Activated CD4-positive, alpha-beta T cell treated with anti-CD3 and anti-CD28 coated beads, Interleukin-2, amount 10 ng/mL, durations not matched to agents 24 days and 14 days (primary cell): ENCODE measurements at regions of chr14 and their contacts with region 1.

Region 1: DNA sequence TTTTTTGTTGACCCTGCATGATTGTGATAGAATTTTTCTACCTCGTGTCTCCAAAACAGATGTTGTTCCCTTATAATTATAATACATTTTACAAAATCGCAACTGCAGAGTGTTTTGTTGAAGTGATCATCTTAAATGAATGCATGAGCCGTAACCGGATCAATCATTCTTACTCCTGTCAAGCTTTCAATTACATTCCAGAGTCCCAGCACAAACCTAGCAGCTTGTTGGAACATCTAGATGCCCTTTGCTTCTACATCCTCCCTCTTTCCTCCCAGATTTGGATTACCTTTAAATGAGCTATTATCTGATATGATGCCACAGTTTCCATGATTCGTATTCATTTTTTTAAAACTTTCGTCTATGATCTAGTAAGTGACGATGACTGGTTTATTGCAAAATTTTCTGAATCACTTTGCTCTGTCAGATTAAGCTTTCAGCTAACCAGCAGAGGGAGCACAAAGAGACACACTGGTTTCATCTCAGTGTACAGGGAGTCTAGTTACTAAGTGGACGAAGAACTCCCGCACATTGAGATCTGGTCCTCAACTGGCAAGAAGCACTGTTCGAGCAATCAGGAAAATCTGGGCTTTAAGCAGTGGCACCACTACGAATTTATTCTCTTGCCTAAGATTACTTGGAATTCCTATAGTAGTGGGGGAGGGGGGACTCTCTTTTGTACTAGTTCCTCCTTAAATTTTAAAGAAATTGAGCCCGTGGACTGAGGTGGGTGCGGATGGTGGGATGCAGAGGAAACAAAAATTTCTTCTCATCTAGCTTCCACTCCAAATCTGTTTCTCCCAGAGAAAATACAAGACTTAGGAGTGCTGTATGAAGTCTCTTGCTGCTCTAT is 40.9 kb downstream of the TSHR start:
- DNase-seq: peak; percentile 80
- H3K4me3 Mint-ChIP-seq: no peak overlapping the region
- H3K27ac Mint-ChIP-seq: no peak overlapping the region
- H3K4me1 Mint-ChIP-seq: peaks cover 5% of the 10 kb centered on the region
- H3K27me3 Mint-ChIP-seq: peaks cover 49% of the 10 kb centered on the region

Region 2: DNA sequence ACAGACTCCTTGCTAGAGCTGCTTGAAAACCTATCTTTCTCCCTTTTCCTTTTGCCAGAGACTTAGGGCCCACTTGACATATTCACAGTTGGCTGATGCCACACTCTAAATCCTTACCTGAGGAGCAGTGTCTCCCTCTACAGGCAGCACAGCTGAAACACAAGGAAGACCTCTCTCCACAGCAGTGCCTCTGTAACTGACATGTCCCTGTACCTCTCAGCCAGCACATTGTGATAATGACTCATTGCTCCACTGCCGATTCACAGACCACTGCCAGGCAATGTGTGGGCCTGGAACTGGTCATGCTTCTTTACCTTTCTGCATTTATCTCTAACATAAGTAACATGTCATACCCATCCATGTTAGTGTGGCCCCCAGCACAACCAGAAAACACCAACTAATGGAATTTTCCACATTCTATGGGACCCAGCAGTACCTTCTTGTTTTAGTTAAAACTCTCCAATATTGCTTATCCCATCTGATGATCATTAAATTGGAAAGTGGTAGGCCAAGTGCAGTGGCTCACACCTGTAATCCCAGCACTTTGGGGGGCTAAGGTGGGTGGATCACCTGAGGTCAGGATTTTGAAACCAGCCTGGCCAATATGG is 168.0 kb after region 1 on chr14:
- intact Hi-C with region 1: loop called (anchors 1 kb)
- DNase-seq: peak; percentile 88
- H3K4me3 Mint-ChIP-seq: no peak overlapping the region
- H3K27ac Mint-ChIP-seq: peak overlapping the region; percentile 30
- H3K4me1 Mint-ChIP-seq: peaks cover 23% of the 10 kb centered on the region
- H3K27me3 Mint-ChIP-seq: no peaks in the 10 kb centered on the region

Region 3: GRCh38 chr14:81170104-81170828 is 174.0 kb after region 1 on chr14:
- intact Hi-C with region 1: loop called (anchors 1 kb)
- DNase-seq: peak; percentile 96
- H3K4me3 Mint-ChIP-seq: peak overlapping the region; percentile 96
- H3K27ac Mint-ChIP-seq: peak overlapping the region; percentile 99
- H3K4me1 Mint-ChIP-seq: peaks cover 40% of the 10 kb centered on the region
- H3K27me3 Mint-ChIP-seq: no peaks in the 10 kb centered on the region